Naive thymus-derived CD8-positive, alpha-beta T cell (primary cell): ENCODE measurements at regions of chr12 and their contacts with region 1.

Region 1: DNA sequence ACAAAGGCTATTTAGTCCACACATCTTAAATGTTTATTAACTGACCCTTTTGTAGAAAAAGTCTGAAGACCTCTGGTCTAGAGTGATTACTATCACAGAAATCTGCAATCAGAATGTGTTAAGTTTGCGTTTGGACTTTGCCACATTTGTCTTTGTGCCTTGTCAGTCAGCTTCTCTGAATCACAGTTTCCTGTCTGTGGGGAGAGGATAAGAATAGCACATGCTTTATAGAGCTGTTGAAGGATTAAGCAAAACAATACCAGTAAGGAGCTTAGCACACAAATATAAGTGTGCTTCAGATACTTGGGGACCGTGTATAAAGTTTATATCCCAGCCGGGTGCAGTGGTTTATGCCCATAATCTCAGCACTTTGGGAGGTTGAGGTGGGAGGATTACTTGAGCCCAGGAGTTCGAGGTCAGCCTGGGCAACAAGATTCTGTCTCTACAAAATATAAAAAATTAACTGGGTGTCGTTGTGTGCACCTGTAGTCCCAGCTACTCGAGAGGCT is 63.0 kb upstream of the BTG1 start:
- DNase-seq: peak in 6 of 10 donors; percentile 7 to 68 (median 46)
- ATAC-seq: peak; percentile 87 to 88
- H3K4me3 Mint-ChIP-seq: peak overlapping the region; percentile 45 to 87 (median 76)
- H3K27ac Mint-ChIP-seq: peak overlapping the region; percentile 85 to 98 (median 92)
- H3K4me1 Mint-ChIP-seq: peaks cover 23 to 49% (median 40%) of the 10 kb centered on the region in 4 donors
- H3K27me3 Mint-ChIP-seq: no peaks in the 10 kb centered on the region

Region 2: GRCh38 chr12:92170050-92170449 is 38.6 kb before region 1 on chr12:
- POLR2A ChIA-PET with region 1: interaction called, 11 read pairs
- DNase-seq: no peak
- ATAC-seq: no peak
- H3K4me3 Mint-ChIP-seq: no peak overlapping the region
- H3K27ac Mint-ChIP-seq: peak overlapping the region in 4 of 10 donors; percentile 0 to 29 (median 13)
- H3K4me1 Mint-ChIP-seq: peaks cover 19 to 53% (median 35%) of the 10 kb centered on the region in 4 donors
- H3K27me3 Mint-ChIP-seq: no peaks in the 10 kb centered on the region

Region 3: DNA sequence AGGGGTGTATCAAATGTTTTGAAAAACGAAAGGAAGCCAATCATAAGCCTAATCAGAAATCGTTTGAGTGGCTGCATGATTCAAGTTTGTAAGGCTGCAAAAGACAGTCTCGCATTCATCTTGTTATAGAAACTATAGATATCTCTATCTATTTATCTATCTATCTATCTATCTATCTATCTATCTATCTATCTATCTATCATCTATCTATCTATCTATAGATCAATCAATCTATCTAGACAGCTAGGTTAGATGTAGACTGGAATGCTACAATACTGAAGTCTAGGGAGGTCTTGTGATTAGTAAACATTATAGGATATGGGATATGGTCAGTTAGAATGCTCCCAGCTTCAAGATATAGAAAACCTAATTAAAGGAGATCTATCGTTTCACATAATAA is 10.9 kb before region 1 on chr12:
- POLR2A ChIA-PET with region 1: interaction called, 15 read pairs
- DNase-seq: no peak
- ATAC-seq: no peak
- H3K4me3 Mint-ChIP-seq: no peak overlapping the region
- H3K27ac Mint-ChIP-seq: peak overlapping the region in 1 of 10 donors; percentile 60
- H3K4me1 Mint-ChIP-seq: peaks cover 6 to 21% (median 15%) of the 10 kb centered on the region in 4 donors
- H3K27me3 Mint-ChIP-seq: no peaks in the 10 kb centered on the region

Region 4: GRCh38 chr12:92244036-92244435 is 35.4 kb after region 1 on chr12:
- POLR2A ChIA-PET with region 1: no interaction called
- DNase-seq: no peak
- ATAC-seq: no peak
- H3K4me3 Mint-ChIP-seq: peak overlapping the region in 3 of 10 donors; percentile 27 to 55 (median 33)
- H3K27ac Mint-ChIP-seq: peak overlapping the region in 8 of 10 donors; percentile 0 to 80 (median 42)
- H3K4me1 Mint-ChIP-seq: peaks cover 15 to 23% (median 17%) of the 10 kb centered on the region in 4 donors
- H3K27me3 Mint-ChIP-seq: no peaks in the 10 kb centered on the region

Region 5: DNA sequence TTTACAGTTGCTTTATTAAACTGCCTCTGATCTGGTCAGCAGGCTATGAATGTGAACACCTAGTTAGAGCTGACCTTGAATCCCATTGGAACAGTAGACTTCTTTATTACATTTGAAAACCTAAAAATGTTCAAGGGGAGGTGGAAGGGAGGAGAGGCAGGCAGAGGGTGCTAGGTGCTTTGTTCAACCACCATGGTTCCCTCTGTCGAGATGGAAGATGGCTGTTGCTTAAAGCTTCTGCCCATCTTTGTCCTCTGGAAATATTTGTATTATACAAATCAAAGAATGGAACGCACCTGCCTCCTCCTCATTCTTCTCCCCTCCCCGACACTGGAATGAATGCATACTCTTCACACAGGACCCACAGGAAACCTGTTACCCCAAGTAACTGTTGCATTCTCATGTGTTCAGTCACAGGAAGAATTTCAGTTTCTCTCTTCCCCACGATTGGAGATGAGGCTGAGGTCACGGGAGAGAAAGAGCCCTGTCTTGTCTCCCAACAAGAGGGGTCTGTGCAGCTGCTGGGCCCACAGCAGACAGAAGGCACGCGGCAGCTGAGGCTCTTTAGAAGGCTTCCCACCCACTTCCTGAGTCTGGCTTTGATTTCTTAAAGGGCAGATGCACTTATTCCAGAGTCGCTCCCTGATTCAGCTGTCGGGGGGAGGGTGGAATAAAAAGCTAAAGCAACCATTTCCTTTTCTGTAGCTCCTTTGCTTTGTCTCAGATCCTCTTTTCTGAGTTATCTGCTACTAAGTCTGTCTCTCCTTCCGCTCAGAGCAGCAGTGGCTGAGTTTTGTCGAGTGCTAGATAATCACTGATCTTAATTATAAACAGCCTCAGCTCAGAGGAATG is 154.9 kb after region 1 on chr12:
- POLR2A ChIA-PET with region 1: interaction called, 11 read pairs
- DNase-seq: peak; percentile 21 to 80 (median 58)
- ATAC-seq: peak; percentile 72 to 82
- H3K4me3 Mint-ChIP-seq: peak overlapping the region; percentile 70 to 88 (median 84)
- H3K27ac Mint-ChIP-seq: peak overlapping the region; percentile 91 to 99 (median 97)
- H3K4me1 Mint-ChIP-seq: peaks cover 31 to 78% (median 71%) of the 10 kb centered on the region in 4 donors
- H3K27me3 Mint-ChIP-seq: no peaks in the 10 kb centered on the region

Region 6: DNA sequence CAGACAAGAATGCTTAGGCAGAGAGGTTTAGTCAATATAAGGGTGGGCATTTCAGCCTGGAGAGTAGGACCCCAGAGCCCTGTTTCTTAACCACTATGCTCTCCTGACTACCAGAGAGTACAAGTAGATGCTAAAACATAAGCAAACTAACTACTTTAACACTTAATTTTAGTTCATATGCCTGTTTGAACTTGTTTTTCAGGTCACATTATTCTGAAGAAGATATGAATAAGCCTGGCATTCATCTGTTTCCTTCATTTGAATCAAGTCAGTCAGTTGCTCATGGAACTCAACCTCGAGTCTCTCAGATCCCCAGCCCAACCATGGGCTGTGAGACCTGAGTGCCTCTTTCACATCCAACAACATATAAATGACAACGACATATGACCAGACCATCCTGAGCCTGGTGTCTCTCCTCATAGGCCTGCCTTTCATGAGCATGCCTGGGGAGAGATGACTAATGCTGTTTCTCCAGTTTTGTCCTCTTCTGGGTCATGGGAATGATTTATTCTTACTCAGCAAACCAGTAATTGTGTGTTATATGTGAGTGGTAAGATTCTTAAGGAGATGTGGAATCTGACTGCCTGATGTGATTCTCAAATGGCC is 188.1 kb after region 1 on chr12:
- POLR2A ChIA-PET with region 1: interaction called, 14 read pairs
- DNase-seq: no peak
- ATAC-seq: no peak
- H3K4me3 Mint-ChIP-seq: peak overlapping the region in 8 of 10 donors; percentile 18 to 94 (median 53)
- H3K27ac Mint-ChIP-seq: peak overlapping the region; percentile 95 to 99 (median 97)
- H3K4me1 Mint-ChIP-seq: peaks cover 48 to 98% (median 92%) of the 10 kb centered on the region in 4 donors
- H3K27me3 Mint-ChIP-seq: no peaks in the 10 kb centered on the region